Activated CD4-positive, alpha-beta T cell treated with anti-CD3 and anti-CD28 coated beads, Interleukin-2, amount 10 ng/mL, durations not matched to agents 24 days and 14 days (primary cell): ENCODE measurements at regions of chr2 and their contacts with region 1.

Region 1: GRCh38 chr2:12416600-12416999 is 300.1 kb upstream of the TRIB2 start:
- DNase-seq: peak; percentile 86
- H3K4me3 Mint-ChIP-seq: peak overlapping the region; percentile 4
- H3K27ac Mint-ChIP-seq: peak overlapping the region; percentile 25
- H3K4me1 Mint-ChIP-seq: peaks cover 54% of the 10 kb centered on the region
- H3K27me3 Mint-ChIP-seq: no peaks in the 10 kb centered on the region

Region 2: DNA sequence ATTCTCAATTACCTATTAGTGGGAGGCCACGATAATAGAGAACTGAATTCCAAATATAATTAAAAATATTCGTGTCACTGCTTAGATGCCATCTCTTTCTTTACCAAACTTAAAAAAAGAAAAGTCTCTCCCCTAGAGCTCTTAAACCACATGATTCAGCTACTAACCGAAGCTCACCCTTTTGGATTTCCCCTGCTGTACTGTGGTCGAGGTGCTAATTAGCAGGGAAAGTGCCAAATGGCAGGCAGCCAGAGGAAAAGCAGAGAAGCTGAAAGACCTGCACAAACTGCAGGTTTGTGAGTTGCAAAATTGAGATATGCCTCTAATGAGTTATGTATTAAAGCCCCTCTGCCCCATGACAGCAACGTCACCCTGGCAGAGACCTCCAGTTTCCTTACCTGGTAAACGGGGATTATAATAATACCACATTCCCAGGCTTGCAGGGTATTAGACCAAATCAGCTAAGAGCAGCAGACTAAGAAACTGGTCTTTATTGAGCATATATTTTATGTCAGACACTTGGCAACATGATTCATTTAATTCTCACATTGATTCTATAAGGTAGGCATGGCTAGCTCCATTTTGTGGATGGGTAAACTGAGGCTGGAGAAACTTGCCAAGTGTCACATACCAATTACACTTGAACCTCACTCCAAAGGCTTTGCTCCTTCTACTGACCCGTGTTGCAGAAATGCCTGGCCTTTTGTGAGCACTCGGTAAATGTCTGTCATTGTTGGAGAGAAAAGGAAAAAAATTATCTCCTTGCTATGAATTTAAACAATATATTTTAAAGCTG is 410.5 kb before region 1 on chr2:
- intact Hi-C with region 1: loop called (anchors 10 kb)
- DNase-seq: peak; percentile 86
- H3K4me3 Mint-ChIP-seq: no peak overlapping the region
- H3K27ac Mint-ChIP-seq: no peak overlapping the region
- H3K4me1 Mint-ChIP-seq: peaks cover 8% of the 10 kb centered on the region
- H3K27me3 Mint-ChIP-seq: peaks cover 63% of the 10 kb centered on the region

Region 3: GRCh38 chr2:12227941-12228608 is 188.5 kb before region 1 on chr2:
- intact Hi-C with region 1: no loop called
- DNase-seq: no peak
- H3K4me3 Mint-ChIP-seq: no peak overlapping the region
- H3K27ac Mint-ChIP-seq: no peak overlapping the region
- H3K4me1 Mint-ChIP-seq: no peaks in the 10 kb centered on the region
- H3K27me3 Mint-ChIP-seq: peaks cover 9% of the 10 kb centered on the region

Region 4: DNA sequence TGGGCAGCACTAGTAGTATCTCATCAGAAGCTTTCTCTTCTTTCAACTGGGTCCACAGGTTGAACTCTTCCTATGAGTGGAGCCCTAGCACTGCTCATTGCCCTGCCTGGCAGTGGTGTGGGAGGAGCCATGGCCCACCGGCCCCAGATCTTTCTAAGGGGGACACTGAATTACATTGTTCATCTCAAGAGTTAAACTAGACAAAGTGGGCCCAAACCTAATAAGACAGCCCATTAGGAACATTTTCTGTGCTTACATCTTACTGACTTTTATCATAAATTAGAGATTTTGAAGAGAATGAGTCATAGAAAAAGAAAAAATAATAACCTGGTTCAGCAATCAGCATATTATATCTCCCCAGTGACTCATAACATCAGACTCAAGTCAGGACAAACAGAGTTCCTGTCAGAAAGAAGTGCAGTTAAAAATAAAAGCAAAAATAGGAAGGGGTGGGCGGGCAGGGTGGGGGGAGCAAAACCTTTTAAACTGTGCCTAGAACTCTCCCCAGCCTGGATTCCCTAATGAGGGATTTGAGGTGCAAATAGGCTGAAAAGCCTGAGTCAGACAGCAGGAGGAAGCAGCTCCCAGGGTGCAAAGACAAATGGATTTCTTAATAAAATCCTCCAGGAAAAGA is 138.5 kb after region 1 on chr2:
- intact Hi-C with region 1: loop called (anchors 5 kb)
- DNase-seq: peak; percentile 59
- H3K4me3 Mint-ChIP-seq: peak overlapping the region; percentile 57
- H3K27ac Mint-ChIP-seq: peak overlapping the region; percentile 88
- H3K4me1 Mint-ChIP-seq: peaks cover 39% of the 10 kb centered on the region
- H3K27me3 Mint-ChIP-seq: no peaks in the 10 kb centered on the region